ENCODE measurements at regions of chr2 and their contacts with region 1.

Region 1: DNA sequence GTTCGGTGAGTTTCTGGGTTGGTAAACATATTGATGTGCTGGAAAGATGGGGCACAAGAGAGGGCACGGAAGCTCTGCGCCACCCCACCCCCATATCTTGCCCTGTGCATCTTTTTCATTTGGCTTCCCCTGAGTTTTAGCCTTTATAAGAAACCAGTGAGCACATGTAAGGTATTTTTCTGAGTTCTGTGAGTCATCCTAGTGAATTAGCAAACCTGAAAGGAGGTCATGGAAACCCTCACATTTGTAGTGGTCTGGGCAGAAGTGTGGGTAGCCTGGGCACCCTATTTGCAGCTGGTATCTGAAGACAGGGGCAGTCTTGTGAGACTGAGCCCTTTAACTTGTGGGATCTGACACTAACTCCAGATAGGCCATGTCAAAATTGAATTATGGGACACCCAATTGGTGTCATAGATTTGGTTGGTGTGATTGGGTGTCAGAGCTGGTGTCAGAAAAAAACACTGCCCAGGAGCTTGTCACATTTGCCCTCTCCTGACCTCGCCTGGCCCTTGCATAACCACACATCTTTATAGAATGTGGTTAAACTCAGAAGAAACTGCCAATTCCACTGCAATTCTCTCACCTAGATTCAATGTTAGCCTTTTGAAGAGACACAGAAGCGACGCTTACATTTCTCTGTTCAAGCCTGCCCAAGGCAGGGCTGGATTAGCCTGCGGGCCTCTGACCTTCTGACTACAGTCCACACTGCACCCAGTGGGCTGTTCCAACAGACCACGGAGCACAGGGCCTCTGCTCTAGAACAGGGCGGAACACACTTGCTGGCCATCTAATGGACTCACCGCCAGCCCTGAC is 12.0 kb upstream of the GALM start:
- DNase-seq: peak; percentile 49
- H3K4me3 Mint-ChIP-seq: peak overlapping the region; percentile 52
- H3K27ac Mint-ChIP-seq: peak overlapping the region; percentile 85
- H3K4me1 Mint-ChIP-seq: peaks cover 64% of the 10 kb centered on the region
- H3K27me3 Mint-ChIP-seq: no peaks in the 10 kb centered on the region

Region 2: GRCh38 chr2:37993143-37993542 is 660.8 kb before region 1 on chr2:
- intact Hi-C with region 1: no loop called
- DNase-seq: no peak
- H3K4me3 Mint-ChIP-seq: no peak overlapping the region
- H3K27ac Mint-ChIP-seq: no peak overlapping the region
- H3K4me1 Mint-ChIP-seq: no peaks in the 10 kb centered on the region
- H3K27me3 Mint-ChIP-seq: no peaks in the 10 kb centered on the region

Region 3: DNA sequence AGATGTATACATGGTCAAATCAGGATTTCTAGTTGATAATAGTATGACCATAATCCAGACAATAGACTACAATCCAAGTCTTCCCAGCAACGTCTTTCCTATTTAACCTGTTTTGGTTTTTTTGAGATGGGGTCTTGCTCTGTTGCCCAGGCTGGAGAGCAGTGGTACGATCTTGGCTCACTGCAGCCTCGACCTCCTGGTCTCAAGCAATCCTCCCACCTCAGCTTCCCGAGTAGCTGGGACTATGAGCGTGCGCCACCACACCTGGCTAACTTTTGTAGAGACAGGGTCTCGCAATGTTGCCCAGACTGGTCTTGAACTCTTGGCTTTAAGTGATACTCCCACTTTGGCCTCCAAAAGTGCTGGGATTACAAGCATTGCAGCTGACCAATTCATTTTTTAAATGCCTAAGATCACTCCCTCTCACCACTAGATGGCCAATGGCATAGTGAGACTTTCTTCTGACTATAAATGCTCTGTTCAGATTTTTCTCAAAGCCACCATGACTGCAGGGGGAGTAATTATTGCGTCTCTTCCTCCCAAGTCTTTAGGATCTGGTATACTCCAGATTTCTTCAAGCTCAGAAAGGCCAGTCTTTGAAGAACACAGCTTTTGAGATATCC is 98.8 kb before region 1 on chr2:
- intact Hi-C with region 1: no loop called
- DNase-seq: no peak
- H3K4me3 Mint-ChIP-seq: no peak overlapping the region
- H3K27ac Mint-ChIP-seq: no peak overlapping the region
- H3K4me1 Mint-ChIP-seq: peaks cover 27% of the 10 kb centered on the region
- H3K27me3 Mint-ChIP-seq: no peaks in the 10 kb centered on the region

Region 4: DNA sequence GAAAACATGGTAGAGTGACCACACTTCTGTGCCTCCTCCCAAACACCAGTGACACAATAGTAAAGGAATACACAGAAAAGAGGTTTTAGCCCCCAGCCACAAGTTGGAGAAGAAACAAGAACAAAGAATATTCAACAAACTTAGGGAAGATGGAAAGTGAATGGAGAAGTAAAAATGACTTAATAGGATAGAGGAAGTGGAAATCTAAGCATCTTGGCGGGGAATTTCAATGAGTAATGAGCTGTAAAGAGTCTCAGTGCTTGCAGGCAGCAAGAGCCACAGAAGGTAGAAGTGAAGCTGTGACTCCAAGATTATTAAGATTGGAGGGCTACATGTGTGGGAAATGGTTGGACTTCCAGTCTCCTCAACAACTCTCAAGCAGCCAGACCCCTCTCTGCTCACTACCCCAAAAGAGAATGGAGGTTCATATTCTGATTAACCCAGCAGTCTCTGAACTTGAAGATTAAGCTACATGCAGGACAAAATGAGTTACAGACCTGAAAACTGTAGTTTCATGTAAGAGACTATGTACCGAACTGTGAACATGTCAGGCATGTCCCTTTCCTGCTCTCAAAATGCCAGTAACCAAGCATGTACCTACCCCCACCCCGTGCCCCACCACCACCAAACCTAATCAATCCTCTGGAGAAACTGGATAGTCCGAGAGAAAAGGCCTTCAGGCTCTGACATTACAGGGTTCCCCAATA is 34.3 kb before region 1 on chr2:
- intact Hi-C with region 1: loop called (anchors 1 kb)
- DNase-seq: no peak
- H3K4me3 Mint-ChIP-seq: no peak overlapping the region
- H3K27ac Mint-ChIP-seq: peak overlapping the region; percentile 19
- H3K4me1 Mint-ChIP-seq: peaks cover 53% of the 10 kb centered on the region
- H3K27me3 Mint-ChIP-seq: no peaks in the 10 kb centered on the region

Region 5: DNA sequence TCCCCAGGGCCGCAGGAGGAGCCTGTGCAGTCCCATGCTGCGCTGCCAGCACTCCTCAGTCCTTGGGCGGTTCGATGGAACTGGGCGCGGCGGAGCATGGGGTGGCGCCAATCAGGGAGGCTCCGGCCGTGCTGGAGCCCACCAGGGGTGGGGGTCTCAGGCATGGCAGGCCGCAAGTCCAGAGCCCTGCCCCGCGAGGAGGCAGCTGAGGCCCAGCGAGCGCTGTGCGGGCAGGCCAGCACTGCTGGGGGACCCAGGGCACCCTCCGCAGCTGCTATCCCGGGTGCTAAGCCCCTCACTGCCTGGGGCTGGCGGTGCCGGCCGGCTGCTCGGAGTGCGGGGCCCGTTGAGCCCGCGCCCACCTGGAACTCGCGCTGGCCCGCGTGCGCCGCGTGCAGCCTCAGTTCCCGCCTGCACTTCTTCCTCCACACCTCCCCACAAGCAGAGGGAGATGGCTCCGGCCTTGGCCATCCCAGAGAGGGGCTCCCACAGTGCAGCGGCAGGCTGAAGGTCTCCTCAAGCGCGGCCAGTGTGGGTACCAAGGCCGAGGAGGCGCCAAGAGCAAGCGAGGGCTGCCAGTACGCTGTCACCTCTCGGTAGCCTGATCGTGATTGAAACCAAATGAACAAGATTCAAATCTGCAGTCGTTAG is 10.8 kb before region 1 on chr2:
- intact Hi-C with region 1: loop called (anchors 1 kb)
- DNase-seq: no peak
- H3K4me3 Mint-ChIP-seq: peak overlapping the region; percentile 61
- H3K27ac Mint-ChIP-seq: peak overlapping the region; percentile 97
- H3K4me1 Mint-ChIP-seq: peaks cover 48% of the 10 kb centered on the region
- H3K27me3 Mint-ChIP-seq: no peaks in the 10 kb centered on the region

Region 6: DNA sequence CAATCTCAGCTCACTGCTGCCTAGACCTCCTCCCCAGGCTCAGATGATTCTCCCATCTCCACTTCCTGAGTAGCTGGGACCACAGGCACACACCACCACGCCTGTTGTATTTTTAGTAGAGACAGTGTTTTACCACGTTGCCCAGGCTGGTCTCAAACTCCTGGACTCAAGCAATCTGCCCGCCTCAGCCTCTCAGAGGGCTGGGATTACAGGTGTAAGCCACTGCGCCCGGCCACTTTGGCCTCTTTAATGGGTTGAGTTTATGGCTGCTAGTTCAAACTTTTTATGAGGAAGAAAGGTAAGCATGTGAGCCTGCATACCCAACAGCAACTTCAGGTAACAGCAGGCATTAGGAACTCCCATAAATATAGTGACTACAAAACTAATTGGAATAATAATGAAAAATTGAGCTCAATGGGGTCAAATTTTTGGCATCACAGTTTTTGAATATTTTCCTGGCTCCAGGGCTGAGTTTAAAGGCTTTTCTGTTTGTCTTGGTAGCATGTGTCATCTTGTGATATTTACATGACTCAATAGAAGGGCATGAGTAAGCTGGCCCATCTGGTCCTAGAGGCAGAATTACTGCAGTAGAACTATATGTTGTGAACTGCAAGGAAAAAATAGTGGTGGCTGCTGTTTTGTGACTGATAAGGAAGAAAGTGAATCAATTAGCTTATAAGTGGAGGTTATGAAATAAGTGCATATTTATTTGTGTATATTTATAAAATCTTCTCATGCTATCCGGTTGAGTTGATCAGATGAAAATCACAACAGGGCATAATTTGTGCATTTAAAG is 36.8 kb after region 1 on chr2:
- intact Hi-C with region 1: loop called (anchors 2 kb)
- DNase-seq: no peak
- H3K4me3 Mint-ChIP-seq: no peak overlapping the region
- H3K27ac Mint-ChIP-seq: peak overlapping the region; percentile 84
- H3K4me1 Mint-ChIP-seq: peaks cover 45% of the 10 kb centered on the region
- H3K27me3 Mint-ChIP-seq: no peaks in the 10 kb centered on the region

Region 7: GRCh38 chr2:38720613-38721241 is 66.8 kb after region 1 on chr2:
- intact Hi-C with region 1: loop called (anchors 1 kb)
- DNase-seq: no peak
- H3K4me3 Mint-ChIP-seq: no peak overlapping the region
- H3K27ac Mint-ChIP-seq: peak overlapping the region; percentile 38
- H3K4me1 Mint-ChIP-seq: peaks cover 50% of the 10 kb centered on the region
- H3K27me3 Mint-ChIP-seq: no peaks in the 10 kb centered on the region

Region 8: DNA sequence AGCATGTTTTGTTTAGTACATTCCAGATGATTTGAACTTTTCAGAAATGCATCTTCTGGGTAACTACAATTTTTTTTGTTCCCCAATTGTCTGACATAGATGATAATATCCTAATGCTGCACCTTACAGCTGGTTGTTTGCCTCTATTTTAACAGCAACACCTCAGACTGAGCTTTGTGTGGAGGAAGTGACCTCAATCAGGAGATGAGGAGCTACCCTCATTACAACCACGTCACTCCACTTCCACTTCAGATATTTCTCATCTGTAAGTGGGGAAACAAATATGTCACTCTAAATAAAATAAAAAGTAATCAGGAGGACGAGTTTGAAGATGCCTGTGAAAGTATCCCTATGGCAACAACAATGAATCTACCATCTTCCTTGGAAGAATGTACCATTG is 109.3 kb after region 1 on chr2:
- intact Hi-C with region 1: no loop called
- DNase-seq: no peak
- H3K4me3 Mint-ChIP-seq: no peak overlapping the region
- H3K27ac Mint-ChIP-seq: no peak overlapping the region
- H3K4me1 Mint-ChIP-seq: peaks cover 8% of the 10 kb centered on the region
- H3K27me3 Mint-ChIP-seq: no peaks in the 10 kb centered on the region